Activated CD4-positive, alpha-beta memory T cell treated with anti-CD3 and anti-CD28 coated beads, Interleukin-2, amount 10 ng/mL, durations not matched to agents 7 days and 5 days (primary cell): ENCODE measurements at regions of chr1 and their contacts with region 1.

Region 1: GRCh38 chr1:8182034-8182761 is 135.7 kb upstream of the SLC45A1 start:
- DNase-seq: peak; percentile 48
- H3K4me3 Mint-ChIP-seq: peak overlapping the region; percentile 46
- H3K27ac Mint-ChIP-seq: peak overlapping the region; percentile 92
- H3K4me1 Mint-ChIP-seq: peaks cover 24% of the 10 kb centered on the region
- H3K27me3 Mint-ChIP-seq: peaks cover 1% of the 10 kb centered on the region

Region 2: DNA sequence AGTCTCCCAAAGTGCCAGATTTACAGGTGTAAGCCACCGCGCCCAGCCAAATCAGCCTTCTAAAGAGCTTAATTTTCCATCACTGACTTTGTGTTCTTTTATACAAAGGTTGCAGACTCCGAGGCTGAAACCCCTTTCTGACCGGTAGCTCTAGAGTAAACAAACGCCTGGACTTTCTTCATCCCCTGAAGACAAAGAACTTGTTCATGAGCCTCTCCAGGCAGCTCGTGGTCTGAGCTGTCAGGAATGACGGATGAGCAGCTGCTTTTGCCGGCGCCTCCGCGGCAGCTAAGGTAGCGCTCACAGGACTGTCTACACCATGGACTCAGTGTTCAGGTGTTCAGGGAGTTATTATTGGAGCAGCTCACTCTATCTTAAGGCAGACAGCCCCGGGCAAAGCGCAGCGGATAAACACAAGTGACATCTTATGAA is 27.6 kb before region 1 on chr1:
- CTCF ChIA-PET with region 1: no interaction called
- POLR2A ChIA-PET with region 1: interaction called, 12 read pairs
- DNase-seq: no peak
- H3K4me3 Mint-ChIP-seq: no peak overlapping the region
- H3K27ac Mint-ChIP-seq: no peak overlapping the region
- H3K4me1 Mint-ChIP-seq: peaks cover 32% of the 10 kb centered on the region
- H3K27me3 Mint-ChIP-seq: no peaks in the 10 kb centered on the region